ENCODE measurements at regions of chr9 and their contacts with region 1.

Region 1: GRCh38 chr9:134024828-134025605 is at the start of gene BRD3OS:
- DNase-seq: peak; percentile 96 to 97
- ATAC-seq: peak; percentile 94 to 98 (median 96)
- H3K4me3 ChIP-seq: peak within 1 kb of the TSS; percentile 78 to 98 (median 94)
- H3K27ac ChIP-seq: peak within 1 kb of the TSS; percentile 26 to 81 (median 74)
- H3K4me1 ChIP-seq: peaks cover 3 to 18% (median 9%) of the 10 kb centered on the region in 9 donors
- H3K27me3 ChIP-seq: no peaks in the 10 kb centered on the region
- CTCF ChIP-seq: no peak
- total RNA-seq, gene BRD3OS: 4.1 to 11.6 (median 7.8) TPM

Region 2: GRCh38 chr9:133429641-133430161 is 595.3 kb before region 1 on chr9:
- intact Hi-C with region 1: no loop called
- DNase-seq: peak; percentile 23 to 31
- ATAC-seq: peak in 3 of 8 donors; percentile 45 to 60 (median 51)
- H3K4me3 ChIP-seq: no peak overlapping the region
- H3K27ac ChIP-seq: no peak overlapping the region
- H3K4me1 ChIP-seq: peaks cover 0 to 5% (median 3%) of the 10 kb centered on the region in 9 donors
- H3K27me3 ChIP-seq: peaks cover 5 to 44% (median 41%) of the 10 kb centered on the region in 7 donors
- CTCF ChIP-seq: peak in 5 of 9 donors; percentile 17 to 38 (median 32)

Region 3: DNA sequence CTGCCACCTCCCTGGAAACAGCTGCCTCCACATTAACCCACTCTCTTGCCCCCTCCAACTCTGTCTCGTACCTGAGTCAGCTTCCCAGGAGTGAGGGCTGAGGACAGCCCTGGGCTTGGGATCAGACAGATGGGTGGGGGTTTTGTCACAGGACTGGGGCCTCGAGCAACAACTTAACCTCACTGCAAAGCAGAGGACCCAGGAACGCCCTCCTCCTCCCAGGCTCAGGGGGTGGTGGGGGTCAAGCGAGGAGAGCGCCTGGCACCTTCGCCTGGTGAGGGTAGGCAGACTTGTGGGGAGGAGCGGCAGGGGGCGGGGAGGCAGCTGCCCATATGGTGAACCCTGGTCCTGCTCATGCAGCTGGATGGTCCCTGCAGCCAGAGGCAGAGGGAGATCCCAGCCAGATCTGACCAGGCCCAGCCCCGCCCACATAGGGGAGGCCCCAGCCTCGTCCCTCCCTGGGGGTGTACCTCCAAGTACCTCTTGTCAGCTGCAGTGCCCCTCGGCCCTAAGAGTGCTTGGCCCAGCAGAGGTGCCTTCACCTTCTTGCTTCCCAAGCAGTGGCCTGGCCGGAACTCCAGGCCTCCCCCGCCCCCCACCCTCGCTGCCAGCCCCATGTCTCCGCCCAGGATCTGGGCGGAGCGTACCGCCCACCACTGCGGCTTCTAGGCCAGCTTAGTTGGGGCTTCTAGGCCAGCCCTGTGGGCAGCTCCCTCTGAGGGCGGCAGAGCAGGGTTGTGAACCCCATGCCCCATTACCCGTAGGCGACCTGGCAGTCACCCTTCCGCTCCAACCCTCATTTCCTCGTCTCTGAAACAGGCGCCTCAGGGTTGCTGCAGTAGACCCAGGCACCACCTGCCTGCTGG is 287.0 kb before region 1 on chr9 and contains the start of gene SARDH:
- intact Hi-C with region 1: no loop called
- DNase-seq: peak; percentile 51 to 62
- ATAC-seq: peak; percentile 62 to 79 (median 72)
- H3K4me3 ChIP-seq: peak within 1 kb of the TSS in 9 of 10 donors; percentile 17 to 54 (median 49)
- H3K27ac ChIP-seq: peak within 1 kb of the TSS in 1 of 10 donors; percentile 28
- H3K4me1 ChIP-seq: peaks cover 0 to 21% (median 11%) of the 10 kb centered on the region in 9 donors
- H3K27me3 ChIP-seq: peaks cover 0 to 27% (median 8%) of the 10 kb centered on the region in 7 donors
- CTCF ChIP-seq: no peak
- total RNA-seq, gene SARDH: 0.28 to 1.8 (median 0.68) TPM

Region 4: DNA sequence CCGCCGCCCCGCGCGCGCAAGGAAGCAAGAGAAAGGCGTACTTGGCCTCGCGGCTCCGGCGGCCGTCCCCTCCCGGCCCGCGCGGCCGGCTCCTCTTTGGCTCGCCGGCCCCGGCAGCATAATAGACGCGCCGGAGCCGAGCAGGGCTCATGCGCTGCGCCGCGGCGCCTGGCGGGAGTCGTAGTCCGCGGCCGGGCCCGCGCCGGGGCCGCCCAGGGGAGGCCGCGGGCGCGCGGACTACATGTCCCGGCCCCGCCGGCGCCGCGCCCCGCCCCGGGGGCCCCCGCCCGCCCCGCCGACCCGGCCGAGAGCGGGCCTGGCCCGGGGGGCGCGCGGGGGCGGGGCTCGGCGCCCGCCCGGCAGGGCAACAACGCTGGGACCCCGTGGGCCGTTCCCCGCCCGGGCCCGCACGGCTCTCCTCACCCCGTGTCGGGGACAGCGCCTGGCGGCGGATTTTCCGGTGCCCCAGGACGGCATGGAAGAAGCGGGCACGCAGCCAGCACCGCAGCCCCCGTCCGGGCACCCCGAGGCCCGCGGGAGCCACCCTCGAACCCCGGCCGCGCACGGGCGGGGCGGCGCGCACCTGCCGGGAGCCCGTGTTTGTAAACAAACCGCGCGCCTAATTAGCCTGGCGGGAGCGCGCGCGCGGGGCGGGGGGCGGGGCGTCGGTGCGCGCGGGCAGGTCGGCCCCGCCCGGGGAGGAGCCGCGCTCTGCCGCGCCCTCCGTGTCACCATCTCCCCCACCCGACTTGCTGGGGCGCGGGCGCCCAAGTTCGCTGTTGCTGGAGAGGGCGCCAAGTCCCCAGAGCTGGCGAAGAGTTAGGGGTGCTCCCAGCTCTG is 43.1 kb after region 1 on chr9 and contains the start of gene BRD3:
- intact Hi-C with region 1: loop called in 3 of 10 experiments (anchors 5 kb)
- DNase-seq: peak; percentile 83 to 86
- ATAC-seq: peak; percentile 84 to 94 (median 92)
- H3K4me3 ChIP-seq: peak within 1 kb of the TSS; percentile 70 to 98 (median 84)
- H3K27ac ChIP-seq: peak within 1 kb of the TSS; percentile 92 to 100 (median 98)
- H3K4me1 ChIP-seq: peaks cover 4 to 46% (median 37%) of the 10 kb centered on the region in 9 donors
- H3K27me3 ChIP-seq: peaks cover 0 to 14% (median 0%) of the 10 kb centered on the region in 7 donors
- CTCF ChIP-seq: peak in 1 of 9 donors; percentile 12
- total RNA-seq, gene BRD3: 23.2 to 34.4 (median 29.7) TPM

Region 5: GRCh38 chr9:134135343-134136118 is 110.5 kb after region 1 on chr9 and contains the start of gene WDR5:
- intact Hi-C with region 1: loop called in 2 of 10 experiments (anchors 5 to 10 kb)
- DNase-seq: peak; percentile 94 to 97
- ATAC-seq: peak; percentile 82 to 95 (median 88)
- H3K4me3 ChIP-seq: peak within 1 kb of the TSS; percentile 74 to 100 (median 92)
- H3K27ac ChIP-seq: peak within 1 kb of the TSS; percentile 84 to 94 (median 93)
- H3K4me1 ChIP-seq: peaks cover 19 to 62% (median 40%) of the 10 kb centered on the region in 9 donors
- H3K27me3 ChIP-seq: no peaks in the 10 kb centered on the region
- CTCF ChIP-seq: peak in 5 of 9 donors; percentile 21 to 53 (median 46)
- total RNA-seq, gene WDR5: 16.1 to 22.5 (median 18.1) TPM

Region 6: GRCh38 chr9:134375430-134376385 is 350.7 kb after region 1 on chr9:
- intact Hi-C with region 1: no loop called
- DNase-seq: peak; percentile 59 to 67
- ATAC-seq: peak; percentile 23 to 40 (median 32)
- H3K4me3 ChIP-seq: peak overlapping the region in 7 of 10 donors; percentile 4 to 38 (median 22)
- H3K27ac ChIP-seq: peak overlapping the region; percentile 82 to 98 (median 90)
- H3K4me1 ChIP-seq: peaks cover 84 to 100% (median 100%) of the 10 kb centered on the region in 9 donors
- H3K27me3 ChIP-seq: no peaks in the 10 kb centered on the region
- CTCF ChIP-seq: peak in 1 of 9 donors; percentile 10

Measured in heart right ventricle (tissue), 16 donors.